Activated CD4-positive, alpha-beta T cell treated with anti-CD3 and anti-CD28 coated beads, Interleukin-2, amount 10 ng/mL, durations not matched to agents 24 days and 14 days (primary cell): ENCODE measurements at regions of chr1 and their contacts with region 1.

Region 1: GRCh38 chr1:16187748-16188401 is 24.6 kb downstream of the ARHGEF19 start:
- DNase-seq: peak; percentile 94
- H3K4me3 Mint-ChIP-seq: no peak overlapping the region
- H3K27ac Mint-ChIP-seq: no peak overlapping the region
- H3K4me1 Mint-ChIP-seq: no peaks in the 10 kb centered on the region
- H3K27me3 Mint-ChIP-seq: peaks cover 7% of the 10 kb centered on the region

Region 2: GRCh38 chr1:16101623-16102022 is 86.3 kb before region 1 on chr1:
- intact Hi-C with region 1: no loop called
- DNase-seq: no peak
- H3K4me3 Mint-ChIP-seq: no peak overlapping the region
- H3K27ac Mint-ChIP-seq: no peak overlapping the region
- H3K4me1 Mint-ChIP-seq: no peaks in the 10 kb centered on the region
- H3K27me3 Mint-ChIP-seq: peaks cover 25% of the 10 kb centered on the region

Region 3: GRCh38 chr1:16243936-16244649 is 56.2 kb after region 1 on chr1:
- intact Hi-C with region 1: loop called (anchors 2 kb)
- DNase-seq: peak; percentile 93
- H3K4me3 Mint-ChIP-seq: no peak overlapping the region
- H3K27ac Mint-ChIP-seq: no peak overlapping the region
- H3K4me1 Mint-ChIP-seq: peaks cover 8% of the 10 kb centered on the region
- H3K27me3 Mint-ChIP-seq: no peaks in the 10 kb centered on the region